Posterior cingulate gyrus (tissue), 11 donors: ENCODE measurements at regions of chr20 and their contacts with region 1.

Region 1: DNA sequence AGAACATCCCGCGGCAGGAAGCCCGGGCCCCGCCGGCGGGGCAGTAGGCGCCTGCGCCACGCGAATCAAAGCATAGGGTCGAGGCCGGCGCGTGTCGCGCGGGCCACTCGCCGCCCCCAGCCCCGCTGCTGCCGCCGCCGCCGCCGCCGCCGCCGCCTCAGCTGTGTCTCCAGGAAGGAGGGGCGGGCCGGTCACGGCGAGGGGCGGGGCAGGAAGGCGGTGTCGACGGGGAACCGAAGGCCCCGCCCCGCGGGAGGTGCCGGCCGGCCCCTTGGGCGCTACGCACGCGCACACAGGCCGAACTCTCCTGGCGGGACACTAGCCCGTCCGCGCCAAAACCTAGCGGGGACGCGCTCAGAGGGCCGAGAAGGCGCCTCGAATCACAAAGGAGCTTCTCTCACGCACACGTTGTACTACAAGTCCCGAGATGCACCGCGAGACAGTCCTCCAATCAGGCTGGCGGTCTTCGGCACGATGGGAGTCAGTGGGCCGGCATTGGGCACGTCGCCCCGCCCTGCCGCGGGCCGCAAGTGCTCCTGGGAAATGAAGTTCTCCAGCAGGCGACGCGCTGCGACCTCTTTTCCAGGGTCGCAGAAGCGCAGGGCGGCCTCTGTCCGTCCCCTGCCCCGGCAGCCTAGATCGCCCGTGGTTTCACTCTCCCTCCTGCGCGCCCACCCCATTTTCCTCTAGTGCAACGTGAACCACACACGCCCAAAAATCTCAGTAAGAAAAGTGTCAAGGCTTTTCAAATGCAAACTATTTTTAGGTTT is at the start of gene RALGAPA2:
- DNase-seq: peak; percentile 96 to 99 (median 98)

Region 2: DNA sequence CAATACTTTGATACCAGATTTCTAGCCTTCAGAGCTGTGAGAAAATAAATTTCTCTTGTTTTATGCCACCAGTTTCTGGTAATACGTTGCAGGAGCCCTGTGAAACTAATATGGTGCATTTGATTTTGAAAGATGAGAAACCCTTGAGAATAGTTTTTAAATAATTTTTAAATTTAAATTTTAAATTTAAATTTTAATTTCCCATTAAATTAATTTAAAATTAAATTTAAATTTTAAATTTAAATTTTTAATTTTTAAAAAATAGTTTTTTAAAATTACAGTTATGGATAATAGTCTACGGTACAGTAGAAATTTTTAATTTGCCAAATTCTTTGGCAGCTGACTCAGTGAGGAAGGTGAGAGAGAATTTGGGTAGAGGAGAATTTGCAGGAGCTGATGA is 1568.8 kb before region 1 on chr20:
- intact Hi-C with region 1: no loop called
- DNase-seq: no peak

Region 3: DNA sequence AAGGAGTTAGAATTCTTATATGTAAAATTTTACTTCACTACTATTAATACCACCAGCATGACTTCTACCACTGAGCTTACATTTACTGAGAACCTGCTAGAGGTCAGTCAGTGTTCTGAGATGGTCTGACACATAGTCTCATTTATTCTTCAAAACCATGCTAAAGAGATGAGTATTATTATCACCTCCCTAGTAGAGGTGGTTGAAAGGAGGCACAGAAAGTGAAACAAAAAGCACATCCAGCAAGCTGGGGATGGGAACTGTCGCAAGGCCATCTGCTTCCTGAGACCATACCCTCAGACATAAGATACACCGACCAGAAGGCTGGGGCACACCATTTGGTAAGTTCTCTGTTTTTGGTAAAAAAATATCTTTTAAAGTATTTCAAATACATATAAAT is 207.1 kb before region 1 on chr20:
- intact Hi-C with region 1: no loop called
- DNase-seq: no peak

Region 4: GRCh38 chr20:20664795-20665589 is 47.7 kb before region 1 on chr20:
- intact Hi-C with region 1: loop called (anchors 5 kb)
- DNase-seq: peak in 2 of 10 donors; percentile 19 to 65

Region 5: GRCh38 chr20:20824924-20825584 is 112.4 kb after region 1 on chr20:
- intact Hi-C with region 1: loop called (anchors 5 kb)
- DNase-seq: peak in 8 of 10 donors; percentile 43 to 91 (median 64)

Region 6: DNA sequence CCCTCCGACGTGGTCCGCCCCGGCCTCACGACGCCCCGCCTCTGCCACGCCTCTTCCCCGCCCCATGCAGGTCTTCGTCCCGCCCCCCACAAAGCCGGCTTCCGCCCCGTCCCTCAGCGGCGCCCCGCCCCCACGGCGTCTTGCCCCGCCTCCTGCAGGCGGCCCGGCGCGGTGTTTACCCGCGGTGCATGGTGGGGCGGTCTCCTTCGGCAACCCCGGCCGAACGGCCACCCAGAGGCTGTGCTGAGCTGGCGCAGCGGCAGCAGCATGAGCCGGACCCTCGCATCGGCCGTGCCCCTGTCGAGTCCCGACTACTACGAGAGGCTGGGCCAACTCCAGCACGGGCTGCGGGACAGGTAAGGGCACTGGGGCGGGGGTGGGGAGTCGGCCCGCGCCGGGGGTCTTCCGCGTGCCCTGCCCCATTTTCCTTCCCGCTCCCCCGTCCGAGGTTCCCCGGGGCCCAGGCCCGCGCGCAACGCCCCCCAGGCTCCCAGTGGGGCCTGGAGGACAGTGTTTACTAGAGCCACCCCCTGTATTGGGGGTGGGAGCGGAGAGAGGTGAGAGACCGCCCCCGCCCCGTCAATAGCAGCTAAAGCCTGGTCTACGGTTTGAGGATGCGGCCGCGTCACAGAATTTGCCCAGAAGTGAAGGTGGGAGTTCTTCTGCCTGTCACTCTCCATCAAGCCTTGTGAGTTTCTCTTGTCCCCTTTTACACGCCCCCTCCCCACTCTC is 413.4 kb after region 1 on chr20 and contains the start of gene KIZ:
- intact Hi-C with region 1: loop called (anchors 5 kb)
- DNase-seq: peak; percentile 93 to 99 (median 96)